Endothelial cell of umbilical vein (primary cell): ENCODE measurements at regions of chr21 and their contacts with region 1.

Region 1: GRCh38 chr21:37582590-37582989 is 216.0 kb downstream of the DYRK1A start:
- DNase-seq: peak; percentile 69
- H3K4me3 ChIP-seq: no peak overlapping the region
- H3K27ac ChIP-seq: no peak overlapping the region
- H3K4me1 ChIP-seq: peaks cover 13% of the 10 kb centered on the region
- H3K27me3 ChIP-seq: no peaks in the 10 kb centered on the region
- CTCF ChIP-seq: peak; percentile 68 to 76
- POLR2A ChIP-seq: no peak

Region 2: GRCh38 chr21:37475186-37475868 is 107.3 kb before region 1 on chr21:
- CTCF ChIA-PET with region 1: no interaction called
- POLR2A ChIA-PET with region 1: no interaction called
- dilution Hi-C with region 1: no loop called
- intact Hi-C with region 1: no loop called
- DNase-seq: no peak
- H3K4me3 ChIP-seq: no peak overlapping the region
- H3K27ac ChIP-seq: no peak overlapping the region
- H3K4me1 ChIP-seq: peaks cover 4% of the 10 kb centered on the region
- H3K27me3 ChIP-seq: no peaks in the 10 kb centered on the region
- CTCF ChIP-seq: no peak
- POLR2A ChIP-seq: no peak

Region 3: GRCh38 chr21:37496972-37497371 is 85.6 kb before region 1 on chr21:
- CTCF ChIA-PET with region 1: interaction called, 14 read pairs
- POLR2A ChIA-PET with region 1: no interaction called
- dilution Hi-C with region 1: no loop called
- intact Hi-C with region 1: loop called (anchors 1 kb)
- DNase-seq: peak; percentile 36
- H3K4me3 ChIP-seq: no peak overlapping the region
- H3K27ac ChIP-seq: no peak overlapping the region
- H3K4me1 ChIP-seq: no peaks in the 10 kb centered on the region
- H3K27me3 ChIP-seq: no peaks in the 10 kb centered on the region
- CTCF ChIP-seq: peak in 1 of 2 donors; percentile 6
- POLR2A ChIP-seq: no peak

Region 4: DNA sequence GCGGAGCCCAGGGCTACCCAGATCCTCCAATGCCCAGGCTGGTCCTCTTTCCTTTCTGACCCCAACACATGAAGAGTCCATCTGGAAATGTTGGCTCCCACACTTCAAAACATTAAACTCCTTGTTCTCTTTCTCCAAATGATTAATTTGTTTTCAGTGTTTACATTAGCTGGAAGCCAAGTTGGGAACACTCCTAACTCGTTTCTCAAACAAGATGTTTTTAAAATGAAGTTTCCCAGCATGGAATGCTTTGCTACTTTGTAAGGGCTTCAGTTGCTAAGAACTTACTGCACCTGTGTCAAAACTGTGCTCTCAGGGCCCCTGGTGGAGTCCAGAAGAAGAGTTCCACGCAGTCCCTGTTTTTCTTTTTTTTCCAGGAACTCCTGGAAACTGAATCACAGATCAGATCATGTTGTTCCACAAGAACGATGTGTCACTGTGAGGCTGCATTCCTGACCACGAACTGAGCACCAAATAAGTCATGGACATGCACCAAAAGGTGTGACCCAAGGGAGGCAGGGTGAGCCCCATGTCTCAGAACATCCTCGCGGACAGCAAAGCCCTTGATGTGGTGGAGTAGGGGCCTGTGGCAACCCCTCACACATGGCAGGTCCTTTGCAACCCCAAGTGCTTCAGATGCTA is 76.3 kb after region 1 on chr21:
- CTCF ChIA-PET with region 1: interaction called, 3 read pairs
- POLR2A ChIA-PET with region 1: no interaction called
- dilution Hi-C with region 1: no loop called
- intact Hi-C with region 1: loop called (anchors 5 kb)
- DNase-seq: peak; percentile 95
- H3K4me3 ChIP-seq: no peak overlapping the region
- H3K27ac ChIP-seq: peak overlapping the region; percentile 72
- H3K4me1 ChIP-seq: peaks cover 22% of the 10 kb centered on the region
- H3K27me3 ChIP-seq: no peaks in the 10 kb centered on the region
- CTCF ChIP-seq: peak; percentile 51 to 62
- POLR2A ChIP-seq: no peak